ENCODE measurements at regions of chr1 and their contacts with region 1.

Region 1: GRCh38 chr1:98210064-98210463 is 289.2 kb upstream of the DPYD start:
- DNase-seq: peak; percentile 89
- H3K4me3 ChIP-seq: peak overlapping the region; percentile 31 to 94 (median 89)
- H3K27ac ChIP-seq: peak overlapping the region; percentile 91
- H3K4me1 ChIP-seq: peaks cover 23% of the 10 kb centered on the region
- H3K27me3 ChIP-seq: no peaks in the 10 kb centered on the region
- CTCF ChIP-seq: no peak
- POLR2A ChIP-seq: peak; percentile 69

Region 2: DNA sequence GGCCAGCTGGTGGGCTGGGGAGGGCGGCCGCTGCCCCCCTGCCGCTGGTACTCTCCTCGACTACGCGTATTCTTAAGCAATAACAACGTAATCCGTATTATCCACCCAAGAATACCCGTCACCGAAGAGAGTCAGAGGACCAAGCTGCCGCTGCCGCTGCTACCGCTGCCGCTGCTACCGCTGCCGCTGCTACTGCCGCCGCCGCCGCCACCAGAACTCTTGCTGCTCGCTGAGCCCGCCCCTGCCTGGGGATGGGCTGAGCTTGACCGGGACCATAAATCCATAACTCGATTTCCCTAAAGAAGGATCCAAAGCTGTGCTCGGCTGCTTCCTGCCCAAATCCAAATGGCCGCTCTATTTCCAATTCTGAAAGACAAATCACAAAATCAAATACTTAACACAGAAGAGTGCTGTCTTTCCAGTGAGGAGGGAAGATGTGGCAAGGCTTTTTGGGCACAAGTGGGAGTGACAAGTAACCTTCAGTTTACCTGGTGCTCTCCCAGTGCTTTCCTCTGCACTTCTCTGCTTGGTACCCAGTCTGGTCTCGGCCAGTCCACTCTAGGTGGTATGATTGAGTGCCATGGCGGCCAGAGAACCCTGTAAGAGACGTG is 163.9 kb before region 1 on chr1:
- CTCF ChIA-PET with region 1: no interaction called
- POLR2A ChIA-PET with region 1: no interaction called
- dilution Hi-C with region 1: no loop called
- intact Hi-C with region 1: no loop called
- DNase-seq: peak; percentile 70
- H3K4me3 ChIP-seq: peak overlapping the region; percentile 34 to 80 (median 55)
- H3K27ac ChIP-seq: peak overlapping the region; percentile 41
- H3K4me1 ChIP-seq: peaks cover 23% of the 10 kb centered on the region
- H3K27me3 ChIP-seq: no peaks in the 10 kb centered on the region
- CTCF ChIP-seq: peak in 1 of 2 donors; percentile 5
- POLR2A ChIP-seq: no peak

Region 3: DNA sequence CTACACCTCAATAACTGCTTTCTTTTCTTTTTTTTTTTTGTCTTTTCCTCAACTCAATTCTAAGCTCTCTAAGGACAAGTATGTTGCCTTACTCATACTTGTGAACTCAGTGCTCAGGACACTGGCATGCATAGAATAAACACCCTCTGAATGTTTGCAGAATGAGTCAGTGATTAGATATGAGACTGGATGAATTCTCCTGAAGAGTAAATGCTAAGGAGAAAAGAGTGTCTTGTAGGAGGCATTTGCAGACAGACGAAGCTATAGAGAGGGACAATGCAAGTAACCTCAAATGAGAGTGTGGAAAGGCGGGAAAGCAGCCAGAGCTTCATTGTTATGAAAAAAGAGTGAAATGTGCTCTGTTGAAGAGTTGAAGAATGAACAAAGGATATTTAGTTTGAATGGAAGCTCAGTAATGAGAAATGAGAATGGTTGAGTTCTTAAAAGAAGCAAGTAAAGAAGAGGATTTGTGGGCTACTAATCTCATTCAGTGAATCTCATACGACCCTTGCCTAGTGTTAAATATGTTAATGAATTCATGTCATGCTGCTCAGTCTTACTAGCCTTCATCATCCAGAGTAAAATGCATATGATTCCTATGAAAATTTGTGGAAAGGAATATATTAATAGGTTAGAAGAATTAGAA is 123.1 kb before region 1 on chr1:
- CTCF ChIA-PET with region 1: interaction called, 4 read pairs
- POLR2A ChIA-PET with region 1: interaction called, 8 read pairs
- dilution Hi-C with region 1: no loop called
- intact Hi-C with region 1: loop called (anchors 1 kb)
- DNase-seq: peak; percentile 95
- H3K4me3 ChIP-seq: peak overlapping the region in 1 of 3 experiments; percentile 90
- H3K27ac ChIP-seq: peak overlapping the region; percentile 71
- H3K4me1 ChIP-seq: peaks cover 46% of the 10 kb centered on the region
- H3K27me3 ChIP-seq: no peaks in the 10 kb centered on the region
- CTCF ChIP-seq: no peak
- POLR2A ChIP-seq: no peak

Region 4: GRCh38 chr1:98260839-98261238 is 50.8 kb after region 1 on chr1:
- CTCF ChIA-PET with region 1: no interaction called
- POLR2A ChIA-PET with region 1: no interaction called
- dilution Hi-C with region 1: no loop called
- intact Hi-C with region 1: loop called (anchors 1 kb)
- DNase-seq: peak; percentile 12
- H3K4me3 ChIP-seq: no peak overlapping the region
- H3K27ac ChIP-seq: no peak overlapping the region
- H3K4me1 ChIP-seq: peaks cover 41% of the 10 kb centered on the region
- H3K27me3 ChIP-seq: no peaks in the 10 kb centered on the region
- CTCF ChIP-seq: peak in 1 of 2 donors; percentile 37
- POLR2A ChIP-seq: no peak

Region 5: GRCh38 chr1:98388441-98388840 is 178.4 kb after region 1 on chr1:
- CTCF ChIA-PET with region 1: interaction called, 7 read pairs
- POLR2A ChIA-PET with region 1: no interaction called
- dilution Hi-C with region 1: no loop called
- intact Hi-C with region 1: loop called (anchors 1 kb)
- DNase-seq: peak; percentile 91
- H3K4me3 ChIP-seq: peak overlapping the region in 1 of 3 experiments; percentile 27
- H3K27ac ChIP-seq: peak overlapping the region; percentile 80
- H3K4me1 ChIP-seq: peaks cover 57% of the 10 kb centered on the region
- H3K27me3 ChIP-seq: no peaks in the 10 kb centered on the region
- CTCF ChIP-seq: no peak
- POLR2A ChIP-seq: peak; percentile 18

Region 6: DNA sequence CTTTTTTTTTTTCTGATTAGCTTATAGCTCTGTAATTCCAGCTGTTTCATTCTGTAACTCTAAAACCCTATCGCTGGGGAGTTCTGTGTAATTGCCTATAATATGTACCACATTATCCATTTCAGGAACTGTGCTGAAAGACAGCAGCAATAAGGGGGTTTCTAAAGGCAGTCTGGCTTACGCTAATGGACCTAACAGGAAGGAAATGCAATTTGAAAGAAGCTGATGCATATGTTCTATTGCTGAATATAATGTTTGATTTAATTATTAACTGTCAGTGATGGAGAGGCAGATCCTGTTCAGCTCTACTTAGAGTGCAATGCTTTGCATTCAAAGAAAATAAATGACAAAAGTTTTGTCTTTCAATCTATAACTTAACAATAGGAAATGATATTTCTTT is 242.1 kb after region 1 on chr1:
- CTCF ChIA-PET with region 1: no interaction called
- POLR2A ChIA-PET with region 1: interaction called, 10 read pairs
- dilution Hi-C with region 1: no loop called
- intact Hi-C with region 1: no loop called
- DNase-seq: no peak
- H3K4me3 ChIP-seq: no peak overlapping the region
- H3K27ac ChIP-seq: no peak overlapping the region
- H3K4me1 ChIP-seq: no peaks in the 10 kb centered on the region
- H3K27me3 ChIP-seq: no peaks in the 10 kb centered on the region
- CTCF ChIP-seq: no peak
- POLR2A ChIP-seq: no peak